GM13977 (cell line): ENCODE measurements at regions of chr4 and their contacts with region 1.

Region 1: DNA sequence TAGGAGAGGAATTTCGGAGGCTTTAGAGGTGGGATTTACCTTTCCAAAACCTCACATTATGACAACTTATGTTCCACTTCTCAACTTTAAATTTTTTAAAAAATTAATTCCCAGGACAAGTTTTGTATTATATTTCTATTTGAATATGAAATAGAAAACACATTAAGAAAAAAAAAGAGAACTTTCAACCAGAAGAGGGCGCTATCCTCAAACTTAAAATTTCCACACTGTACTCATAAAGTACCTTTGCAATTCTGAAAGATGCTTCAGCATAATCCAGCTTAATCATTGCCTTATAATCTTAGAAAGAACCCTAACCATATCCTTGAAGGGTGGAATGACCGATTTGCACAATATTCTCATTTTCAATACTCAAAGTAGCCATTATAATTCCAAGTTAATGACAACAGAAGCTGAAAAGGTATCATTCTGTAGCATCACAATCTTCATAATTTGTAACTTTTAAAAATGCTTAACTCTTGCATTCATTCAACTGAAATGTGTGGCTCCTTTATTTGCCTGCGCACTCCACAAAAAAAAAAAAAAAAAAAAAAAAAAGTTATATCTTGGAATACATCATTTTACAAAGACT is 158.0 kb downstream of the KCNIP4 start:
- DNase-seq: peak; percentile 4
- CTCF ChIP-seq: peak; percentile 37

Region 2: DNA sequence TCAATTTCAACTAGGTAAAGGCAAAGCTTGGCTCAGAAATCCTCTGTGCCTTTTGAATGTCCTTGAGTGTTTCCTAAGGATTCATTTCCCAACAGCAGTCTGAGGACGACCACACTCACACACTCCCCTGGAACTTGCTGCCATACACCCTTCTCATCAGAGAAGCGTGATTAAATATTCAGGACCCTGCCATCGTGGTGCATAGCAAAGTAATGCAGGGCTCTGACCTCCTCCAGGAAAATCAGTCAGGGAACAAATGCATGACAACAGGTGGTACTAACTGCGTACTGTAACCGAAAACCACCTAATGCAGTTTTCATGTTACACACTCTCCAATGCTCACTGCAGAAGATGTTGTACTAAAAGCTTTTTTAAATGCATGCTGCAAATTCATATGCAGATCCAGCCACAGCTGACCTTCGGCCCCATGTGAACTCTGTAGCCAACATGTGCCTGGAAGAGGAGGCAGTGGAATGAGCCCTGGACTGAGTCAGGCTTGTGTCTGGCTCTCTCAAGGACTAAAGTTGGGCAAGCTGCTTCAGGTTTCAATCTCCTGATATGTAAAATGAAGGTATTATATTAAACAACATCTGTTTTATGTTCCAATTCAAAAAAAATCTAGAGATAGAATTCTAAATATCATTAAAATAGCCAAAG is 80.2 kb before region 1 on chr4:
- in situ Hi-C with region 1: no loop called
- DNase-seq: no peak
- CTCF ChIP-seq: no peak

Region 3: DNA sequence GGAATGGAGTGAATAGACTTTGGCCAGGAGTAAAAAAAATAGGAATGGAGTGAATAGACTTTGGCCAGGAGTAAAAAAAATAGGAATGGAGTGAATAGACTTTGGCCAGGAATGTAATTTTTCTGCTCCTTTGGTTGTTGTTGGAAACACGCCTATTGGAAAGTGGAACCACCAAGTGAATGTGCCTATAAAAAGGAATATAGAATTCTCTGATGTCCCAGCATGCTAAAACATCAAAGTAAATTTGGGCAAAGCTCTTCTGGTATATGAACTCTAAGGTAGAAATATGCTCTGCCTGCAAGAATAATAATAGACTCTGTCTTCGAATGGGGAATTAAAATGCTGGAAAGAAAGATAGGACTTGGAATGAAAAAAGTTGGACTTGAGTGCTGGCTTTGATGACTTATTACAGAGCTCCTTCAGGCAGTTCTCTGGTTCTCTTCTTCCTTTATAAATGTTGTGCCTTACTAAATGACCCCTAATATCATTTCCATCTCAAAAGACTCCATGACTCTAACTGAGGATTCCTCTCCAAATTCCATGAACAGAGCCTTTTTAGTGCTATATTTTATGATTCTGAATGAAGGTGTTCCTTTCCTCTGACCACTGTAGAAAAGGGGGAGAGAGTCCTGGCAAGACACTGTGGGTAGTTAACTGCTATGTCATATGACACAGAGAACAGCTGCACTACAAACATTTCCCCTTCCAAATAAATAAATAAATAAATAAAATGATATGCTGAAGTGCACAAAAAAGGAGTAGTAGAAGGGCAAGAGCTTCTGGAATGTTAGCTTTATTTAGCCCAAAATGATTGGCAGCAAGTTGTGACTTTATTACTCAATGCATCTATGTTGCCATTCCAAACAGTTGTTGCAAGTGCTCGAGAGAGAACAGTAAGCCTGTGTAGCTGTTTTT is 888.7 kb after region 1 on chr4:
- in situ Hi-C with region 1: loop called (anchors 25 kb)
- DNase-seq: no peak
- CTCF ChIP-seq: no peak